Heart left ventricle (tissue), 16 donors: ENCODE measurements at regions of chr11 and their contacts with region 1.

Region 1: DNA sequence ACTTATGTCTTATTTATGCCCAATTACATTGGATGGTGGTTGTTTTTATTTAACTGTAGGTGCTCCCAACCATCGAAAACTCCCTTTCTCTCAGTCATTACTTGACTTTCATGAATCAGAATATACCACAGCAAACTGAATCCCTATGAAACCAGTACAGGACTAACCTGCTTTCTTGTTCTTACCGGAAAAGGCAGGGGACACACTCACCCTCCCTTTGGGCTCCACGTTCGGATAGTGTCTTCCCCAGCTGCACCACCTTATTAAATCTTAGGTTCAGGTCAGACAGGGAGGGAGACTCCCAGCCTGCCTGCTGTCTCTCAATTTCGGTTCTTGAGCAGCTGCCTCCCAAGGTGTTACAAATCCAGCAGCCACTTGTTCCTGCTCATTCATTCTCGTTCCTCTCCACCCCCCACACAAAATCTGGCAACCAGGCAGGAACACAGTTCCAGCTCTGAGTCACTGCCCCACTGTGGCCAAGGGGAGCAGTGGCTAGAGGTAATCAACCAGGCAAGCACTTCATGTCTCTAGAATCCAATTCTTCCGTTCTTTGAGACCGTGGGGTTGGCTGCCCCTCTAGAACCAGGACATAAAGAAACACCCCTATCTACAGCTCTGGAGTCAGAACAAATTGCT is 133.0 kb downstream of the PLEKHA7 start:
- DNase-seq: peak; percentile 67 to 84 (median 72)
- ATAC-seq: peak; percentile 84 to 93 (median 90)
- H3K4me3 ChIP-seq: peak overlapping the region in 8 of 12 donors; percentile 2 to 39 (median 26)
- H3K27ac ChIP-seq: peak overlapping the region in 9 of 12 donors; percentile 17 to 74 (median 66)
- H3K4me1 ChIP-seq: peaks cover 0 to 71% (median 30%) of the 10 kb centered on the region in 12 donors
- H3K27me3 ChIP-seq: no peaks in the 10 kb centered on the region
- CTCF ChIP-seq: peak in 11 of 12 donors; percentile 22 to 68 (median 48)
- POLR2A ChIP-seq: no peak

Region 2: DNA sequence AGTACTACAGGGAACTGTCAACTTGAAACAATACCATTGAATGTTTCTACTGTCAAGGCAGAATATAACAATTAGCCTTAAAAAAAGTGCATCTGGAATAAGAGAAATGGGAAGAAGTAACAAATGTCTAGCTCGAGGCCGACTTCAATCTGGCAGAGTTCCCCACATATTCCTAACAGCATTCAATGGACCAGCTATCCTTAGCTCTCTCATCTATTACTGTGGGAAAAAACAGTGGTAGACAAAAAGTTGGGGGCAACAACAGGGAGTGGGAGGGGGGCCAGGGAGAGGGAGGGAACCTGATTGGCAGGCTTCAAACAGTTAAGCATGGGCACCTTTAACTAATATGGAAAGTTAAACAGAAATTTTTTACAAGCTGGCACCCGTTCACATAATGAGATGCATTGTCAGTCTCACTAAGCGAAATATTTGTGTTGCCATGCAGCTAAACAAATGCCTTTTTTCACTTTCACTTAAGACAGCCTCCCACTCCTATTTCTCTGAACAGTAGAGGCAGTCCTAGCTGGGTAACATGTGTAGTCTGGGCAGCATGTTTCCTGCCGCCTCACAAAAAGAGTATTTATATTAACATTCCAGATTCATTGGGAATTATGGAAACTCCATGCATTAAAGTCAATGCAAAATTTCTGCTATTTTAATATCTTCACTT is 462.6 kb before region 1 on chr11:
- intact Hi-C with region 1: no loop called
- DNase-seq: no peak
- ATAC-seq: no peak
- H3K4me3 ChIP-seq: no peak overlapping the region
- H3K27ac ChIP-seq: no peak overlapping the region
- H3K4me1 ChIP-seq: peaks cover 0 to 13% (median 0%) of the 10 kb centered on the region in 12 donors
- H3K27me3 ChIP-seq: no peaks in the 10 kb centered on the region
- CTCF ChIP-seq: no peak
- POLR2A ChIP-seq: no peak

Region 3: GRCh38 chr11:16738193-16738946 is 142.8 kb before region 1 on chr11 and contains the start of gene C11orf58:
- intact Hi-C with region 1: no loop called
- DNase-seq: peak; percentile 96 to 97 (median 96)
- ATAC-seq: peak; percentile 97 to 100 (median 99)
- H3K4me3 ChIP-seq: peak within 1 kb of the TSS; percentile 36 to 94 (median 80)
- H3K27ac ChIP-seq: peak within 1 kb of the TSS; percentile 83 to 98 (median 90)
- H3K4me1 ChIP-seq: peaks cover 4 to 45% (median 36%) of the 10 kb centered on the region in 12 donors
- H3K27me3 ChIP-seq: no peaks in the 10 kb centered on the region
- CTCF ChIP-seq: peak in 1 of 12 donors; percentile 6
- POLR2A ChIP-seq: peak in 1 of 2 donors; percentile 82
- total RNA-seq, gene C11orf58: 88.2 to 130 (median 110) TPM

Region 4: GRCh38 chr11:16825968-16826367 is 55.2 kb before region 1 on chr11:
- intact Hi-C with region 1: loop called in 8 of 10 experiments (anchors 1 to 5 kb)
- DNase-seq: no peak
- ATAC-seq: peak in 3 of 4 donors; percentile 4 to 64 (median 11)
- H3K4me3 ChIP-seq: no peak overlapping the region
- H3K27ac ChIP-seq: peak overlapping the region in 4 of 12 donors; percentile 9 to 57 (median 23)
- H3K4me1 ChIP-seq: peaks cover 0 to 34% (median 11%) of the 10 kb centered on the region in 12 donors
- H3K27me3 ChIP-seq: no peaks in the 10 kb centered on the region
- CTCF ChIP-seq: no peak
- POLR2A ChIP-seq: no peak

Region 5: GRCh38 chr11:16857186-16857585 is 24.0 kb before region 1 on chr11:
- intact Hi-C with region 1: loop called in 3 of 10 experiments (anchors 1 to 2 kb)
- DNase-seq: peak; percentile 61 to 83 (median 71)
- ATAC-seq: peak; percentile 74 to 81 (median 79)
- H3K4me3 ChIP-seq: peak overlapping the region in 3 of 12 donors; percentile 10 to 41 (median 40)
- H3K27ac ChIP-seq: peak overlapping the region; percentile 16 to 93 (median 72)
- H3K4me1 ChIP-seq: peaks cover 0 to 72% (median 35%) of the 10 kb centered on the region in 12 donors
- H3K27me3 ChIP-seq: no peaks in the 10 kb centered on the region
- CTCF ChIP-seq: no peak
- POLR2A ChIP-seq: no peak